Heart left ventricle (tissue), 16 donors: ENCODE measurements at regions of chr19 and their contacts with region 1.

Region 1: GRCh38 chr19:2867025-2867991 is at the start of gene ZNF556:
- DNase-seq: no peak
- ATAC-seq: peak in 3 of 4 donors; percentile 36 to 79 (median 42)
- H3K4me3 ChIP-seq: no peak within 1 kb of the TSS
- H3K27ac ChIP-seq: no peak within 1 kb of the TSS
- H3K4me1 ChIP-seq: no peaks in the 10 kb centered on the region
- H3K27me3 ChIP-seq: no peaks in the 10 kb centered on the region
- CTCF ChIP-seq: no peak
- POLR2A ChIP-seq: no peak
- total RNA-seq, gene ZNF556: 0.16 to 0.20 TPM in 2 of 9 donors, not detected in the others

Region 2: GRCh38 chr19:2648528-2648937 is 218.8 kb before region 1 on chr19:
- intact Hi-C with region 1: loop called in 9 of 10 experiments (anchors 5 to 10 kb)
- DNase-seq: peak; percentile 68 to 84 (median 72)
- ATAC-seq: peak; percentile 61 to 91 (median 89)
- H3K4me3 ChIP-seq: no peak overlapping the region
- H3K27ac ChIP-seq: no peak overlapping the region
- H3K4me1 ChIP-seq: peaks cover 0 to 3% (median 0%) of the 10 kb centered on the region in 12 donors
- H3K27me3 ChIP-seq: no peaks in the 10 kb centered on the region
- CTCF ChIP-seq: peak; percentile 65 to 85 (median 72)
- POLR2A ChIP-seq: no peak

Region 3: GRCh38 chr19:2653710-2654707 is 213.3 kb before region 1 on chr19:
- intact Hi-C with region 1: loop called in 9 of 10 experiments (anchors 5 to 10 kb)
- DNase-seq: no peak
- ATAC-seq: peak in 3 of 4 donors; percentile 25 to 63 (median 62)
- H3K4me3 ChIP-seq: no peak overlapping the region
- H3K27ac ChIP-seq: no peak overlapping the region
- H3K4me1 ChIP-seq: peaks cover 0 to 7% (median 0%) of the 10 kb centered on the region in 12 donors
- H3K27me3 ChIP-seq: peaks cover 0 to 2% (median 0%) of the 10 kb centered on the region in 9 donors
- CTCF ChIP-seq: no peak
- POLR2A ChIP-seq: no peak

Region 4: GRCh38 chr19:2691951-2692350 is 175.4 kb before region 1 on chr19:
- intact Hi-C with region 1: no loop called
- DNase-seq: no peak
- ATAC-seq: no peak
- H3K4me3 ChIP-seq: no peak overlapping the region
- H3K27ac ChIP-seq: no peak overlapping the region
- H3K4me1 ChIP-seq: peaks cover 0 to 33% (median 13%) of the 10 kb centered on the region in 12 donors
- H3K27me3 ChIP-seq: no peaks in the 10 kb centered on the region
- CTCF ChIP-seq: no peak
- POLR2A ChIP-seq: no peak

Region 5: DNA sequence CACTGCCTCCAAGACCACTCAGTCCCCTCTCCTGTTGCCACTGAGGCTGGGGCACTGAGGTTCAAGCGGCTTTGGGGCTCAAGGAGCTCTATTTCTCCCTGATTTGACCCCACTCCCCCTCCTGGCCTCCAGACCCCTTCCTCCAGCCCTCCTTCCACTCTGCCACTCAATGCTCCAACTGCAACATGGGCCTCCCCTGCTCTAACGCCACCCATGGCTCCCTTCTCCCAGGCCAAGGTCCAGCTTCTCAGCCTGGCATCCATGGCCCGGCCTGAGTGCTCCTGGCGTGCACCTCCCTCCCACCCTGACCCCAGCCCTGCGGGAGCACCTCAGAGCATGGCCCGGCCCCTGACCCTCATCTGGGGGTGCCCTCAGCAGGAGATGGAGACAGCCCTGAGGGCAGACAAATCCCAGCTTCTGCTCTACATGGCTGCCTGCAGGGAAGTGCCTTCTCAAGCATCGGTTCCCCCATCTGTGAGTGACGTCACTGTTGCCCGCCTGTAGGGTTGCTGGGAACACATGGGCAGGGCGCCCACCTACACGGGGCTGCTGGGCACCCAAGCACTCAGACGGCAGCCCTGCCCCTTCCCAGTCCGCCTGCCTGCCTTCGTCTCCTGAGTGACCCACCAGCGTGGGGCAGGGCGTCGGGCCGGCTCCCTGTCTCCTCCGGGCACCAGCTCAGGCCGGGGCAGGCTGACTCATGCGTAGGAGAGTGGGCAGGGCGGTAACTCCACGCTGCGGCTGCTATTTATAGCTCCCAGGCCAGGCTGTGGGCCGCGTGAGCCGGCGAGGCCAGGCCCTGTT is 144.6 kb before region 1 on chr19:
- intact Hi-C with region 1: no loop called
- DNase-seq: peak; percentile 67 to 90 (median 85)
- ATAC-seq: peak; percentile 81 to 88 (median 85)
- H3K4me3 ChIP-seq: no peak overlapping the region
- H3K27ac ChIP-seq: peak overlapping the region in 11 of 12 donors; percentile 77 to 95 (median 90)
- H3K4me1 ChIP-seq: peaks cover 0 to 42% (median 13%) of the 10 kb centered on the region in 12 donors
- H3K27me3 ChIP-seq: peaks cover 9 to 52% (median 23%) of the 10 kb centered on the region in 9 donors
- CTCF ChIP-seq: no peak
- POLR2A ChIP-seq: peak in 1 of 2 donors; percentile 59

Region 6: GRCh38 chr19:2820112-2820702 is 47.1 kb before region 1 on chr19:
- intact Hi-C with region 1: loop called in 1 of 10 experiments (anchors 5 kb)
- DNase-seq: peak in 1 of 5 donors; percentile 37
- ATAC-seq: peak in 2 of 4 donors; percentile 5 to 16
- H3K4me3 ChIP-seq: peak overlapping the region; percentile 59 to 97 (median 84)
- H3K27ac ChIP-seq: peak overlapping the region in 11 of 12 donors; percentile 17 to 84 (median 61)
- H3K4me1 ChIP-seq: peaks cover 0 to 11% (median 5%) of the 10 kb centered on the region in 12 donors
- H3K27me3 ChIP-seq: no peaks in the 10 kb centered on the region
- CTCF ChIP-seq: no peak
- POLR2A ChIP-seq: no peak